ENCODE measurements at regions of chr1 and their contacts with region 1.

Region 1: GRCh38 chr1:12619792-12620487 is 1.9 kb upstream of the DHRS3 start:
- DNase-seq: peak; percentile 88
- H3K4me3 ChIP-seq: peak overlapping the region; percentile 94
- H3K27ac ChIP-seq: peak overlapping the region; percentile 97
- H3K4me1 ChIP-seq: peaks cover 73% of the 10 kb centered on the region
- H3K27me3 ChIP-seq: no peaks in the 10 kb centered on the region
- CTCF ChIP-seq: peak; percentile 97

Region 2: DNA sequence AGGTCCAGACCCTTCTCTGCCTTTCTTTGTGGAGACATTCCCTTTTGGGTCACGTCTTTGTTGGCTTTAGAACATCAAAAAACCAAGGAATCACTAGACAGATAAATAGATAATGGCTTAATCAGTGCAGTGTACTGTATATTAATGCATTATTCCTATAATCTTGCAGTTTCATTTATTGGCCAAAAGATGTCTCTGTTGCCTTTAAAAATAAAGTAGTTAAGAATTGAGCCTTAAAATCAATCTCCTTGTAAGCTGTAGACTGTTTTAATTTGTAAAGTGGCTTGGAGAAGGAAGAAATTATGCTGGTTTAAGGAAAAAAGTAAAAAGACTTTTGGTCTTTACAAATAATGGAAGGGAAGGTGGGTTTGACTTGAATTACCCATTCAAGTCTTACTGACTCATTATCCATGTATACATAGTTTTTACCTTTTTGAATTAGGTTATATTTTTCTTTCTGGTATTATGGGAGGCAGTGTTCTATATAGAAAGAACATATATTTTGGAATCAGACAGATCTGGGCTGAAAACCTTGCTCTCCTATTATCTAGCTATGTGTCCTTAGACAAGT is 305.5 kb before region 1 on chr1:
- intact Hi-C with region 1: loop called (anchors 10 kb)
- DNase-seq: no peak
- H3K4me3 ChIP-seq: no peak overlapping the region
- H3K27ac ChIP-seq: peak overlapping the region; percentile 60
- H3K4me1 ChIP-seq: peaks cover 35% of the 10 kb centered on the region
- H3K27me3 ChIP-seq: no peaks in the 10 kb centered on the region
- CTCF ChIP-seq: peak; percentile 61

Region 3: DNA sequence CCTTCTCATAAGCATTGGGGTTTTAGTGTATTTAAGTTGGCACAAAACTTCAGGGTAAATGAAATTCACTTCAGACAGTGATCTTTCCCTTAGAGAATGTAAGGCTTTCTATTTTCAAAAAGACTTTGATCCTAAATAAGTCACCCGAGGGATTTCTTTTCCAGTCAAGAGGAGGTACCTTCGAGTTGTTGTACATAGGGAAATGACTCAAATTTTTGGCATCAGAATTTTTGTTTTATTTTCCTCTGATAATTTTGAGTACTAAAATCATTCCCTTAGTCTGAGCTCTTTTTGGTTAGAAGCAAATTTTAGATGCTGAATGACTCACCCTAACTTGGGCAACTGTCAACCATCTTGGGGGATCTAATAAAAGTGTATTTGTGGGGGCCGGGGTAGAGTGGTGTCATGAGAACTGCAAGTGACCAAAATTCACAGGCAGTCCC is 195.8 kb before region 1 on chr1:
- intact Hi-C with region 1: loop called (anchors 10 kb)
- DNase-seq: no peak
- H3K4me3 ChIP-seq: no peak overlapping the region
- H3K27ac ChIP-seq: peak overlapping the region; percentile 74
- H3K4me1 ChIP-seq: peaks cover 39% of the 10 kb centered on the region
- H3K27me3 ChIP-seq: no peaks in the 10 kb centered on the region
- CTCF ChIP-seq: no peak

Region 4: DNA sequence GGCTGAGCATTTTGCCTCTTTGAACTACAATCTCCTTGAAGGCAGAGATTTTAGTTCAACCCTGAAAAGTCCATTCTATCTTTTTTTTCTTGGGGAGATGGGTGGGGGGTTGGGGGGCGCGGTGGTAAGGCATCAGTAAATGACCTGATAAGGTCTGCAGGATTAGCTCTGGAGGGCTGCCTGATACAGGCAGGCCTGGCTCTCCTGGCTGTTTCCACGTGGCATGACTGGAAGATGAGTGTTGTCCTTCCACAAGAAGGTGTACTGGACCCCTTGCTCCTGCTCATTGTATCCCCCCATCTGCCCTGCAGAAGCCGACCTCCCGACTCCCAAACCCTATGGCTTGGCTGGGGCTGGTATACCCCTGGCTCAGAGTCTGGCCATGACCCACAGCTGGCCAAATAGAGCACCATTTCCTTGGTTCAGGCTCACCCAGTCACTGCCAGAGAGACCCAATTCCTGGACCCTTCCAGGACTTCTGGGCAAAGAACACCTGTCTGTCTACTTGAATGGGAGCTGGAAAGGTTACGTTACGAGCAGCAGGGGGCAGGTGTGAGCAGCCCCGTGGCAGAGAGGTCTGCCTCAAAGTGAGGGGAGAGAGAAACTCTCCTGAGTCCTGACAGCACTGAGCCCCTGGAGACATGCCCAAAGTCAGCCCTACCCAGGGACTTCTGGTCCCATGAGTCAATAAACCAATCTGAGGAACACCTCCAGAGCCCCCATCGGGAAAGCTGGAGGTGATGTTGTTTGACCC is 18.9 kb before region 1 on chr1:
- intact Hi-C with region 1: loop called (anchors 2 kb)
- DNase-seq: no peak
- H3K4me3 ChIP-seq: no peak overlapping the region
- H3K27ac ChIP-seq: peak overlapping the region; percentile 93
- H3K4me1 ChIP-seq: peaks cover 94% of the 10 kb centered on the region
- H3K27me3 ChIP-seq: no peaks in the 10 kb centered on the region
- CTCF ChIP-seq: peak; percentile 58

Region 5: GRCh38 chr1:12756768-12757413 is 137.0 kb after region 1 on chr1:
- intact Hi-C with region 1: no loop called
- DNase-seq: no peak
- H3K4me3 ChIP-seq: no peak overlapping the region
- H3K27ac ChIP-seq: no peak overlapping the region
- H3K4me1 ChIP-seq: no peaks in the 10 kb centered on the region
- H3K27me3 ChIP-seq: peaks cover 75% of the 10 kb centered on the region
- CTCF ChIP-seq: no peak